WTC11 (cell line): ENCODE measurements at regions of chr6 and their contacts with region 1.

Region 1: GRCh38 chr6:37566111-37566949 is 66.6 kb upstream of the CCDC167 start:
- DNase-seq: peak; percentile 86
- ATAC-seq: peak; percentile 78
- H3K4me3 Mint-ChIP-seq: peak overlapping the region; percentile 76
- H3K27ac Mint-ChIP-seq: no peak overlapping the region
- H3K4me1 Mint-ChIP-seq: peaks cover 15% of the 10 kb centered on the region
- H3K27me3 Mint-ChIP-seq: 0 out of 2 replicates have a peak, but pooled peaks cover 5% of the 10 kb centered on the region
- CTCF ChIP-seq: peak; percentile 83

Region 2: DNA sequence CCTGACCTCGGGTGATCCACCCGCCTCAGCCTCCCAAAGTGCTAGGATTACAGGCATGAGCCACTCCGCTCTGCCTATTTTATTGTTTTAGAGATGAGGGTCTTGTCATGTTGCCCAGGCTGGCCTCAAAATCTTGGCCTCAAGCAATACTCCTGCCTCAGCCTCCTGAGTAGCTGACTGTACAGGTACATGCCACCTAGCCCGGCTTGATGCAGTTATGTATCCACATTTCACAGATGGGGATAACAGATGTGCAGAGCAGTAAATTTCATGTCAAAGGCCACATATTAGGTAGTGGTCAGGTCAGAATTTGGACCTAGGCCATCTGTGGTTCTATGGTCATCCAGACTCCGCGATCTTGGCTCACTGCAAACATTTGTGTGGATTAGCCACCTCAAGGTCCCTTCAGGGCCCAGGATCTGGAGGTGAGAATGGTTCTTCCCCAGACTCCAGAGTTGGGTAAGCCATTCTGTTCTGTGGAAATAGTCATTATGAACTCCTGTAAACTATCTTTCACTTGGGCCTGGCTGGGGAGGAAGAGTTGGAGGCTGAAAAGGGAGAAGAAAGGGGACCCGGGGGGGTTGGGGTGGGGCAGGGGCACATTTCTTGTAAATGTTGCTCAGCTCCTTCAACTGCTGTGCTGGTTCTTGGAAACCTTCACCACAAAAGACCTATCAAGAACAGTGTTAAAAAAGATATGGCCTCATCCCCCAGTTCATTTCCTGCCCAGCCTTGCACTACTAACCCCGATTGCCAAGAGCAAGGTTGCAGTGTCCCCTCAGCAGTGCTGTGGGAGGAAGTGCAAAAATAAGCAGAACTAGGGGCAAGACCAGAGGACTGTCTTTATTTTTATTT is 383.4 kb before region 1 on chr6:
- CTCF ChIA-PET with region 1: no interaction called
- POLR2A ChIA-PET with region 1: no interaction called
- DNase-seq: no peak
- ATAC-seq: no peak
- H3K4me3 Mint-ChIP-seq: no peak overlapping the region
- H3K27ac Mint-ChIP-seq: no peak overlapping the region
- H3K4me1 Mint-ChIP-seq: no peaks in the 10 kb centered on the region
- H3K27me3 Mint-ChIP-seq: no peaks in the 10 kb centered on the region
- CTCF ChIP-seq: no peak

Region 3: GRCh38 chr6:37499433-37500293 is 66.7 kb before region 1 on chr6 and contains the start of gene CCDC167:
- CTCF ChIA-PET with region 1: interaction called, 12 read pairs
- POLR2A ChIA-PET with region 1: no interaction called
- DNase-seq: peak; percentile 100
- ATAC-seq: peak; percentile 96
- H3K4me3 Mint-ChIP-seq: peak within 1 kb of the TSS; percentile 93
- H3K27ac Mint-ChIP-seq: peak within 1 kb of the TSS; percentile 94
- H3K4me1 Mint-ChIP-seq: peaks cover 38% of the 10 kb centered on the region
- H3K27me3 Mint-ChIP-seq: peaks cover 11% of the 10 kb centered on the region
- CTCF ChIP-seq: no peak
- total RNA-seq, gene CCDC167: 19.1 to 21.6 TPM (median 19.9 TPM) in 3 replicates

Region 4: DNA sequence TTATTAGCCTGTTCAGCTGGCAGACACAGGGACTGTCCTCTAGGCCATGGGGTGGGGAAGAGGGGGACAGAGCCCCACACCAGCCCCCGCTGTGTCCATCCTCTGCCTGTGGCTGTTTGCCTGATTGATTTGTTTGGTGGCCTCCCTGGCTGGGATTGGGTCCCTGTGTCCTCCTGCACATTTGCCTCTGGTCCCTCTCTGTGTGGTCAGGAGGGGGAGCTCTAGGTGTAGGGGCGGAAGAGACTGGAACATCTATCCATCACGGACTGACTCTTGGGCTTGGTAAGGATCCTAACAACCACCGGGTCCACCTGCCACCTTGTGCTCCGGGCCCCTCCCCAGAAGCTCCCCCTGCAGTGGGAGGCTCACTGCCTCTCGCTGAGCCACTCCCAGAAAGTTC is 28.2 kb before region 1 on chr6:
- CTCF ChIA-PET with region 1: interaction called, 140 read pairs
- POLR2A ChIA-PET with region 1: interaction called, 8 read pairs
- DNase-seq: peak; percentile 63
- ATAC-seq: peak; percentile 56
- H3K4me3 Mint-ChIP-seq: peak overlapping the region; percentile 8; the same call in 1 of the 2 replicates
- H3K27ac Mint-ChIP-seq: no peak overlapping the region
- H3K4me1 Mint-ChIP-seq: peaks cover 37% of the 10 kb centered on the region
- H3K27me3 Mint-ChIP-seq: peaks cover 59% of the 10 kb centered on the region
- CTCF ChIP-seq: 0 out of 2 replicates have a peak, but pooled peaks have one; percentile 20

Region 5: GRCh38 chr6:37582306-37582705 is 16.0 kb after region 1 on chr6:
- CTCF ChIA-PET with region 1: interaction called, 19 read pairs
- POLR2A ChIA-PET with region 1: interaction called, 3 read pairs
- DNase-seq: peak; percentile 41
- ATAC-seq: no peak; the same call in 1 of the 2 replicates
- H3K4me3 Mint-ChIP-seq: no peak overlapping the region
- H3K27ac Mint-ChIP-seq: peak overlapping the region; percentile 57; the same call in 1 of the 2 replicates
- H3K4me1 Mint-ChIP-seq: peaks cover 29% of the 10 kb centered on the region
- H3K27me3 Mint-ChIP-seq: 0 out of 2 replicates have a peak, but pooled peaks cover 2% of the 10 kb centered on the region
- CTCF ChIP-seq: no peak

Region 6: DNA sequence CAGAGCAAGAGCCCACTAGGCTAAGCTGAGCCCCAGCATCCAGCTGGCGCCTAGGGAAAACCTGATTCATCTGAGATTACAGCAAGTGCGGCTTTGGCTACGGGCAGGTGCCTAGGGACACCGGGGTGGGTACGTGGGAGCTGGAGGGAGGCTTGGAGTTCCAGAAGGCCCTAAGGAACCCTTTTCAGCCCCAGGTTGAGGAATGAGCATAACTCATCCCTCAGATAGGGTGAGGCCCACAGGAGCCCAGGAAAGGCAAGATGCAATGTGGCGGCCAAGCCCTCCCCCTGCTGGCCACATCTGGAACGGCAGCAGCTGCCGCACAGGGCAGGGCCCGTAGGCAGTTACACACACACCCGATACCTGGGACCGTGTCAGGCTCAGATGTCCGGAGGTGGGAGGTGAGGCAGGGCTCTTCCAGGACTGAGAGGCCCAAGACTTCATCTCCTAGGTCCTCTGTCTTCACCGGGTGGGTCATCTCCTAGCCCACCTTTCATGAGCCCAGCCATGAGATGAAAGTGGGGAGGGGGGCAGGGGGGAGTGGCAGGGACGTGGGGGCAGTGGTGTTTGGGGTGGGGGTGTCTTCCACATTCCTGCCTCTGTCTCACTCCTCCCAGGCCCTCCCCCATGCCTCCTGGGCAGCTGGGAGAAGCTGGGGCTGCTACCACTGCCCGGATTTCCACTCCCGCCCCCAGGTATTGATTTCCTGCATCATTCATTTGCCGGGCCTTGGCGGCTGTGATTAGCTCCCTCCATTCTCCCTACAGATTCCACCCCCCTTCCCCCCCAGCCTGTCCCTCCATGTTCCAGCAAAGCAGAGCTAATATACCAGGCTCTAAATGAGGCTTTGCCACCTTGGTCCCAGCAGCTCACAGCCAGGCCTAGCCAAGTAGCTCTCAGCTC is 125.8 kb after region 1 on chr6:
- CTCF ChIA-PET with region 1: interaction called, 14 read pairs
- POLR2A ChIA-PET with region 1: interaction called, 3 read pairs
- DNase-seq: peak; percentile 92
- ATAC-seq: peak; percentile 92
- H3K4me3 Mint-ChIP-seq: no peak overlapping the region
- H3K27ac Mint-ChIP-seq: no peak overlapping the region
- H3K4me1 Mint-ChIP-seq: peaks cover 13% of the 10 kb centered on the region
- H3K27me3 Mint-ChIP-seq: peaks cover 53% of the 10 kb centered on the region
- CTCF ChIP-seq: peak; percentile 99

Region 7: GRCh38 chr6:38445336-38445735 is 879.0 kb after region 1 on chr6:
- CTCF ChIA-PET with region 1: no interaction called
- POLR2A ChIA-PET with region 1: no interaction called
- DNase-seq: no peak
- ATAC-seq: no peak
- H3K4me3 Mint-ChIP-seq: no peak overlapping the region
- H3K27ac Mint-ChIP-seq: no peak overlapping the region
- H3K4me1 Mint-ChIP-seq: peaks cover 6% of the 10 kb centered on the region
- H3K27me3 Mint-ChIP-seq: no peaks in the 10 kb centered on the region
- CTCF ChIP-seq: no peak